ENCODE measurements at regions of chr20 and their contacts with region 1.

Region 1: GRCh38 chr20:40962730-40963504 is 65.7 kb upstream of the TOP1 start:
- DNase-seq: peak; percentile 83
- ATAC-seq: peak; percentile 90
- H3K4me3 Mint-ChIP-seq: no peak overlapping the region
- H3K27ac Mint-ChIP-seq: no peak overlapping the region
- H3K4me1 Mint-ChIP-seq: peaks cover 15% of the 10 kb centered on the region
- H3K27me3 Mint-ChIP-seq: peaks cover 5% of the 10 kb centered on the region

Region 2: DNA sequence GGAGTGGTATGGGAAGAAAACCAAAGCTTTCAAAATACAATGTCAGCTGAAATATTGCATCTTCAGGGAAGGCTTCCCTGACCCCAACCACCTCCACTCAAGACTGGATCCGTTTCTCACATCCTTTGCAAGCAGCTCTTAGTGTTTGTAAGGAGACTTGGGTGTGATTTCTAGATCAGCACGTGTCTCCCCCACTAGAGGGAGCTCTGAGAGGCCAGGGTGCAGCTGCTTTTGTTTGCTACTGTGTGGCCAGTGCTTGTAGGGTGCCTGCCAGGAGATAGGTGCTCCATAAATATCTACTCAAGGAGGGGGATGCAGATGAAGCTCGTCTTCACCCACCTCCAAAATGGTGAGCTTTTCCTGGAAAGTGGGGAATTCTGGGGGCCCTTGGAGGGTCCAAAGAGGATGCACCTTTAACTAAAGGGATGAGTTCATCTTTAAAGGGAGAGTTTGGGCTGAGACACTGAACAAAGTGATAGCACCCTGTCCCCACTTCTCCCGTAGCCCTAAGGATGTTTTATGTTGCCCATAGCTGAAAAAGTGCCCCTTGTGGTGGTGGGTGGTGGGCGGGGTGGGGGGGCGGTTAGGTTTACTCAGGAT is 221.3 kb before region 1 on chr20:
- CTCF ChIA-PET with region 1: interaction called, 92 read pairs
- DNase-seq: peak; percentile 70
- ATAC-seq: peak; percentile 51
- H3K4me3 Mint-ChIP-seq: no peak overlapping the region
- H3K27ac Mint-ChIP-seq: no peak overlapping the region
- H3K4me1 Mint-ChIP-seq: no peaks in the 10 kb centered on the region
- H3K27me3 Mint-ChIP-seq: peaks cover 15% of the 10 kb centered on the region

Region 3: DNA sequence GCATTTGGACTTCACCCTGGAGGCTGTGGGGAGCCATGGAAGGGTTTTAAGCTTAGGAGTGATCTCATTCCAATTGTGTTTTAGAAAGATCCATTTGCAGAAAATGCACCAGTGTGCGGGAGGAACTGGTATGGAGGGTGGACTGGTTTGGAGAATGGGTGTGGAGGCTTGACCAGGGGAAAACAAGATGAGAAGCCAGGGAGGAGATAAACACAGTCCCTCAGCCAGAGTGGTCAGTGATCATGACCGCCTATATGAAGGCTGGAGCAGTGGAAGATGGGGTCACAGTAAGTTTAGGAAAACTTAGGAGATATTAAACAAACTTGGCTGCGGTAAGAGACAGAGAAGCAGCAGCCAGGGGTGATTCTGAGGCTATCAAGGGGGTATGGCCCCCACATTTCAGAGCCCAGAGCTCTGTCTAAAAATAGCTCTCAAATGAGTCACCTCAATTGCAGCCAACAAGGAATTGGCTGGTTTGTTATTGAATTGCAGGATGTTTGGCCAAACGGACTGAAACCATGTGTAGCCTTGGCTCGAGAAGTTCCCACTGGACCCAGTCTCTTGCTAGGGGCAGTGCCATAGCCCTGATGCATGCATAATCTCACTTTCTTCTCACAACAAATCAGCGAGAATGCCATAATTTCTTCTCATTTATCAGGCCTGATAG is 94.2 kb before region 1 on chr20:
- CTCF ChIA-PET with region 1: interaction called, 12 read pairs
- DNase-seq: no peak
- ATAC-seq: no peak
- H3K4me3 Mint-ChIP-seq: no peak overlapping the region
- H3K27ac Mint-ChIP-seq: no peak overlapping the region
- H3K4me1 Mint-ChIP-seq: no peaks in the 10 kb centered on the region
- H3K27me3 Mint-ChIP-seq: peaks cover 2% of the 10 kb centered on the region

Region 4: DNA sequence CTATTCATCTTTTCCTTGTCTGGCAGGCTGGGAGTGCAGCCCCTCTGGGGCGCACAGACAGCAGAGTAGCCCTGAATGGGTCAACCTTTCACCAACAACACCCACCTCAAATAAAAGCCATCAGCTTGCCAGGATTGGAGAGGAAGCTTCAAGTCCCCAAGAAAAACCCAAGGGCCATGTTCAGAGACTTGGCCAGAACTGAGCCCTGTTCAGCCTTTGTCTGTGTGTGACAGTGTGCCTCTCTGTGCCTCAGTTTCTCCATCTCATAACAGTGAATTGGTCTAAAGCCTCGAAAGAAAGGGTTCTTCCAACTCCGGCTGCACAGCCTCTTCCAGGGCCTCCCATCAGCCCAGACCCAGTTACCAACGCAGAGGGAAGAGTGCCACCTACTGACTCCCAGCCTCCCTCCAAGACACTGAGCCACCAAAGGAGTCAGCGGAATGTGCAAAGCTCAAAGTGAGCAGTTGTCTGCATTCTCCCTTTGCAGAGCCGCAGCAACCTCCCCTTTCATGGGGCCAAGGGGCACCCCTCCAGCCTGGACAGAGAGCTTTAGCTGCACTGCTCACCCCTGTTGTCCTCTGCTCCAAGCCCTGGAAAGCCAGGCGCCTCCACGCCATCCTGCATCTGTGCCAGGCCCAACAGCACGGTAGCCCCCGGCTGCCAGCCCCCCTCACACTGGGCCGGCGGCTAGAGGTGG is 17.0 kb before region 1 on chr20:
- CTCF ChIA-PET with region 1: interaction called, 24 read pairs
- DNase-seq: peak; percentile 46
- ATAC-seq: peak; percentile 36
- H3K4me3 Mint-ChIP-seq: no peak overlapping the region
- H3K27ac Mint-ChIP-seq: no peak overlapping the region
- H3K4me1 Mint-ChIP-seq: no peaks in the 10 kb centered on the region
- H3K27me3 Mint-ChIP-seq: peaks cover 25% of the 10 kb centered on the region

Region 5: DNA sequence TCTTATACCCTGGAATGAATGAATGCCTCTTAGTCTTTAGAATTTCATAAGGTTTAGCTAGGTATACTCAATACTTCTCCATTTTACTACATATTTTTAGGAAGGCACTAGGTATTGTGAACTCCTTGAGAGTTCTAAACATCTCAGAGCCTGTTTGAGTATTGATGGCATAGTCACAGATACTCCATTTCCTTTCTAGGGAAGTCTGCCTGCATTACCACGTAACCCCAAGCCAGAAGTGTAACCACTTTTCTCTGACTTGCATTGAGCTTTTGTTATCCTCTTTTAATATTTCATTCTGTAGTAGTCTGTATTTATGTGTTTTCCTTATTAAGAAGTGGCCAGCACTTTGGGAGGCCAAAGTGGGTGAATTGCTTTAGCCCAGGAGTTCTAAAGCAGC is 77.9 kb after region 1 on chr20:
- CTCF ChIA-PET with region 1: no interaction called
- DNase-seq: no peak
- ATAC-seq: peak; percentile 76
- H3K4me3 Mint-ChIP-seq: peak overlapping the region; percentile 26
- H3K27ac Mint-ChIP-seq: peak overlapping the region; percentile 82
- H3K4me1 Mint-ChIP-seq: peaks cover 82% of the 10 kb centered on the region
- H3K27me3 Mint-ChIP-seq: no peaks in the 10 kb centered on the region